ENCODE measurements at regions of chr2 and their contacts with region 1.

Region 1: DNA sequence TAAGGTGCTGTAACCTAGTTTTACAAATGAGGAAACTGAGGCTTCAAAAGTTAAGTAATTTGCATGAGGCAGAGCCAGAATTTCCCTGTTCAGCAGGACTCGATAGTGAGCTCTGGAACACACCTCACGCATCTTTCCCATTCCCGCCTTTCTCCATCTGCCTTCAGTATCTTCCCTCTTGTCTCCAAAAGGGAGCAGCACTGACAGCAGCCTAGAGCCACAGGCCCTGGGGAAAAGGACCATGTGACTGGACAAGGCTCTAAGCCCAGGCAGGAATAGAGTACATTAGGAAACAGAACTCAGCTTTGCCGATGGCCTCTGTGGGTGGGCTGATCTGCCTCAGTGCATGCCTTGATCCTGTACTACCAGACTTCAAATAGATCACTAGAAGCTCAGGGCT is 21.5 kb downstream of the GPR155 start:
- DNase-seq: no peak
- ATAC-seq: peak in 1 of 2 donors; percentile 53

Region 2: DNA sequence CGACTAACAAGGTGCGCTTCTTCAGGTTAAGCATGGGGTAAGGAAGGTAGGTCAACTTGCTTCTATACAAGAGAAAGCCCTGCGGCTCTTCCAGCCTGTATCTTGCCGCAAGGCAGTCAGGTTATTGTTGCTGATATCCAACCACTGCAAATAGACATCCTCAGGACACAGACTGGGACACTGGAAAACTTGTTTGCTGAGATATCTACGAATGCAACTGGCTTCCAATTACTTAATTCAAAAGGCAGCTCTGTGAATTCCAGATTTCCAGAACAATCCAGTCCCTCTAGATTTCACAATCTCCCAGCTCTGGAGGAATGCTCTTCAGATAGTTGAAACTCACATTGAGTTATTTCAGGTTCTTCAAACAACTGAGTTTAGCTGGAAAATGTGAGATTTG is 165.2 kb before region 1 on chr2:
- intact Hi-C with region 1: no loop called
- DNase-seq: no peak
- ATAC-seq: no peak

Region 3: DNA sequence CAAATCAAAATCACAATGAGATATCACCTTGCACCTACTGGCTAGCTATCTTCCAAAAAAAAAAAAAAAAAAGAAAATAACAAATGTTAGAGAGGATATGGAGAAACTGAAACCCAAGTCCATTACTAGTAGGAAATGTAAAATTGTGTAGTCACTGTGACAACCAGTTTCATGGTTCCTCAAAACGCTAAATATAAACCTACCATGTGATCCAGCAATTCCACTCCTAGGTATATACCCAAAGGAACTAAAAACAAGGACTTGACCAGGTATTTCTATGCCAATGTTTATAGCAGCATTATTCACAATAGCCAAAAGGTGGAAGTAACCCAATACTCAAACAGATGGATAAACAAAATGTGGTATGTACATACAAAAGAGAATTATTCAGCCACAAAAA is 81.5 kb before region 1 on chr2:
- intact Hi-C with region 1: no loop called
- DNase-seq: no peak
- ATAC-seq: no peak

Region 4: DNA sequence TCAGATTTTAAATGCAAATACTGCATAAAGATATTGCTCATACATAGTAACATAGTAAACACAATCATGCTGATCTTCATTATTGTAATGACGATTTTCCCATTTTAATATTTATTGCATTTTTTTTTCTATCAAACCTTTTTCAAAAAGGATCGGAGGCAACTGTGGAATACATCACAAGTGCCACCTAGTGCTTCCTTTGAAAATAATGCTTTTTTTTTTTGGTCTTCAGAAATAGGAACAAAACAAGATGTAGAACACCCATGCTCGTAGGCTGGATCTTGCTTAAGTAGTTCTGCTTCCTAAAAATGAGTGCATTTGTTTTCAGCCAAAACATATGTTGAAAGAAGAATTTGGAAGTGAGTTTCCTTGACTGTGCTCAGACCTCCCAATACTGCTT is 57.2 kb after region 1 on chr2:
- intact Hi-C with region 1: loop called (anchors 5 to 10 kb)
- DNase-seq: no peak
- ATAC-seq: peak in 1 of 2 donors; percentile 25

Region 5: DNA sequence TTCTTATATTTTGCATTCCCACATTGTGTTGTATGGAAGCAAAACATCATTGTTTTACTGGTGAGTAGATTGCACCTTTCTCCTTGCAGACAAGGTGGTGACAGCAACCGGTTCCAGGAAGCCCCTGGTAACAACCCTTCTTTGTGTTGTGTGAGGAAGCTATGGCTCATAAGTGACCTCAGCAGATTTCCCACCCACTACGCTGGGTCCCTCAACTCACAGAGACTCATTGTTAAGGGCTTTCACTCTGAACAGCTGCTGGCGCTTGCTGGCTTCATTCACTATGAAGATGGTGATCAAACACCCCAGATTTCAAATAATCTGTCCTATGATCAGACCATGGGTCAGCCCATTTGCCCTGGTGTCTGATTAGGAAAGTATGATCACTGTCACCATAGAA is 78.8 kb after region 1 on chr2:
- intact Hi-C with region 1: loop called in 1 of 2 experiments (anchors 5 kb)
- DNase-seq: no peak
- ATAC-seq: peak in 1 of 2 donors; percentile 37

Region 6: GRCh38 chr2:174603280-174603679 is 138.0 kb after region 1 on chr2:
- intact Hi-C with region 1: loop called (anchors 1 to 10 kb)
- DNase-seq: peak; percentile 46
- ATAC-seq: peak; percentile 74 to 90

Region 7: DNA sequence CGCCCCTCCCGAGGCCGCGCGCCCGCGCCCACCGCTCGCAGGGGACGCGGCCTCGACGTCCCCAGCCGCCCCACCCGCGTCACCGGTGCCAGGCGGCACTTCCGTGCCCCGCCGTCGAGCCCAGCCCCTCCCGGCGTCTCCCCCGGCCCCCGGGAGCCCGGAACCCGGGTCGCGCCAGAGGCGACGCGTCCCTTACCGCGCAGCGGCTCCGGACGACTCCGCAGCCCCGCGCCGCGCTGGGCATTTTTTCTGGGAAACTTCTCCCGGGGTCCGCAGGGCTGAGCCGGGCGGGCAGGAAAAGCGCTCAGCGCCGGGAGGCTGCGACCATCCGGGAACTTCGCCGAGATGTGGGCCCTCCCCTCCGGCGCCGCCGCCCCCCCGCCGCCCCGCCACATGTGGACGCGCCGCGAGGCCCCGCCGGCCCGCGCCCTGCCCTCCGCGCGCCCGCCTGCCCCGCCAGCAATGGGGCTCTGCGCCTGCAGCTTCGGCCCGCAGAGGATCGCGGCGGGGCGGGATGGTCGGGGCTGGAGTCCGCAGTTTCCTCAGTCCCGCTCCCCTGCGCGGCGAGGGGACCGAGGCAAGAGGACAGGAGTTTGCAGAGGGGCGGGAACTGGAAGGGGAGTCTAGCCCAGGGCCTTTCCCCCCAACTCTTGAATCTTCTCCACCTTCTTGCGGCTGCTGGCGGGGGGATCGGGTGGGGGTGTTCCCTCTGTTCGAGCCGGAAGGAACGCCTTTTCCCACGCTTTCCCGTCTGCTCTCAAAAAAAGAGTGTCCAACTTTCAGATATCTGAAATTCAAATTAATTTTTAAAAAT is 217.5 kb after region 1 on chr2:
- intact Hi-C with region 1: loop called (anchors 5 to 10 kb)
- DNase-seq: peak; percentile 83
- ATAC-seq: peak; percentile 88 to 95

Region 8: GRCh38 chr2:174688079-174688478 is 222.8 kb after region 1 on chr2:
- intact Hi-C with region 1: loop called (anchors 5 to 10 kb)
- DNase-seq: no peak
- ATAC-seq: no peak

Region 9: DNA sequence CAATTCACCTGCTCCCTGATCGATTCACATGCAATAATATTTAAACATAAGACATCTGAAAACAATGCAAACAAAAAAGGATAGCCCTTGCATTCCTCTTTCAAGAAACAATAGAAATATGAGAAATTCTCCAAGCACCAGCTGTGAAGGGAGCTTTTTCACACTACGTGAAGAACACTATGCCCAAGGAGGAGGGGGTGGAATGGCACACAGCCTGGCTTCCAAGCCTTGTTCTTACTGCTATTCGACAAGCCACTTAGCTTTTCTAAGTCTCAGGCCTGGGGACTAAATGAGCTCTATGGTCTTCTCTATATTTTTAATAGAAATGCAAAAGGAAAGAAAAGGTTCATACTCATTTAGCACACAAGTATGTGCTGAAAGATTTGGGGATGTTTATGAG is 391.1 kb after region 1 on chr2:
- intact Hi-C with region 1: no loop called
- DNase-seq: no peak
- ATAC-seq: no peak